IMR-90 (cell line): ENCODE measurements at regions of chr1 and their contacts with region 1.

Region 1: DNA sequence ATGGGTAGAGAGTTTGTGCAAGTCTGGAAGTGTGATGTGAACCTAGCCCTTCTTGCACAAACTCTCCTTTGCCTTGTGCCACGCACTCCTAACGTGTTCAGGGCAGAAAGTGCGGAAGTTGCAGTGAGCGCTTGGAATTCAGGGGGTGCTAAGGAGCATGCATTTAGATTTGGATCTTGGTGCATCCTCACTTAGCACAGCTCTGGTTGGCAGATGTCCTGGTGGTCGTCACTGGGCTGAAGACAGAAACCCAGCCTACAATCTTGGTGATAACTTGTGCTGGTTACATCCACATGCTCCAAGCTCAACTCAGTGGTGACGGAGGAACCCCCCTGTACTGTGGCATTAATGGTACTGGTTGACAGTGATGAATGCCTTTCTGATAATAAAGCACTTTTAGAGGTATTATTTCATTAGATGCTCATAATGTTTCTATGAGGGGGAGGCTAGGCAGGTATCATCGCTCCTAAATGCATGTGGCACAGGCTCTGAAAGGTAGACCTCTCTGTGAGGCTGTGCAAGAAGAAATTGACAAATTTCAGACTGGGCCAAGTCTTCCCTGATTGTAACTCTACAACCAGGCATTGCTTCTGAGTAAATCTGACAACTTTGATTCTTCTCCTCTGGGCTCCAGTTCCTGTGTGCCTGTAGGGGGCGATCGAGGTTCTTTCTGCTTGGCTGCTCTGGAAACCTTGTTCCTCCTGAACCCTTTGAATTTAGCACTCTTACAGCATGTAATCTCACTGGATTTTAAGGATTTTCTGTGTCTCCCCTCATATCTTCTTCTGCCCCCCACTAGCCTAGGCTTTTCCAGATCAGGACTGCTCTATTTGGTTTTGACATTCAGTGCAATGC is 40.6 kb downstream of the MAPKAPK2 start:
- DNase-seq: peak; percentile 51
- ATAC-seq: peak; percentile 48
- H3K4me3 ChIP-seq: no peak overlapping the region
- H3K27ac ChIP-seq: no peak overlapping the region
- H3K4me1 ChIP-seq: peaks cover 22% of the 10 kb centered on the region
- H3K27me3 ChIP-seq: no peaks in the 10 kb centered on the region
- CTCF ChIP-seq: peak; percentile 62
- POLR2A ChIP-seq: no peak
- RAD21 ChIP-seq: peak; percentile 47

Region 2: DNA sequence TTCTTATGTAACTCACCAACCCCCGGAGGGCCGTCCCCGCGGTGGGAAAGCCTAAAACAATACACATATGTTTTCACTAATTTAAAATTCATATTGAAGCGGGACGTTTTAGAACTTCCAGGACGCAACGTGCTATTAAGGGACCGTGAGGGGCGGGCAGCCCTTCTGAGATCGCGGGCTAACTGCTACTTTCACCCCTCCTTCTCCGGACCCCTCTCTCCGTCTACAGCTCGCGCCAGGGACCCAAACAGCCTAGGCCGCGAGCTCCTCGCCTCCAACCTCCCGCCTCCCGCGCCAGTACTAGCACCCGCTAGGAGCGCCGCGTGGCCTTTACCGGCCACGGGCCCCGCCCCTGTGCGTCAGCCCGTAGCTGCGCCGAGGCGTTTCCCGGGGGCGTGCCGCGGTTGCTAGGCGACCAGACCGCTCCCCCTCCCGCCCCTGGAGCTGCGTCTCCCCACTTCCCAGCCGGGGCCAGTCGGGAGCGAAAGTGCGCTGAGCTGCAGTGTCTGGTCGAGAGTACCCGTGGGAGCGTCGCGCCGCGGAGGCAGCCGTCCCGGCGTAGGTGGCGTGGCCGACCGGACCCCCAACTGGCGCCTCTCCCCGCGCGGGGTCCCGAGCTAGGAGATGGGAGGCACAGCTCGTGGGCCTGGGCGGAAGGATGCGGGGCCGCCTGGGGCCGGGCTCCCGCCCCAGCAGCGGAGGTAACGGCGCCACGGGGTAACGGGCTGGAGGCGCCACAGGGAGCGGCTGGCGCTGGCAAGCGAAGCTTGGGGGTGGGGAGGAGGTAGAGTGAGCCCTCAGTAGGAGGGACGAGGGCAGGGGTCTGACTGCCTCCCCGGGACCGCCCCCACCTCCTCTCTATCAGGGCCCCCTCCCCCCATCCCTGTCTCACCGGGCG is 90.0 kb before region 1 on chr1 and contains the start of gene DYRK3:
- CTCF ChIA-PET with region 1: no interaction called
- POLR2A ChIA-PET with region 1: no interaction called
- dilution Hi-C with region 1: no loop called
- in situ Hi-C with region 1: no loop called
- intact Hi-C with region 1: loop called (anchors 5 kb)
- DNase-seq: peak; percentile 92
- ATAC-seq: peak; percentile 88
- H3K4me3 ChIP-seq: peak within 1 kb of the TSS; percentile 94
- H3K27ac ChIP-seq: peak within 1 kb of the TSS; percentile 69
- H3K4me1 ChIP-seq: peaks cover 8% of the 10 kb centered on the region
- H3K27me3 ChIP-seq: no peaks in the 10 kb centered on the region
- CTCF ChIP-seq: peak; percentile 8; the same call in 1 of the 2 replicates
- POLR2A ChIP-seq: peak; percentile 96
- RAD21 ChIP-seq: no peak
- total RNA-seq, gene DYRK3: 21.1 and 22.0 TPM in 2 replicates

Region 3: GRCh38 chr1:206674745-206675175 is 50.6 kb before region 1 on chr1:
- CTCF ChIA-PET with region 1: no interaction called
- POLR2A ChIA-PET with region 1: no interaction called
- dilution Hi-C with region 1: no loop called
- in situ Hi-C with region 1: no loop called
- intact Hi-C with region 1: loop called (anchors 2 kb)
- DNase-seq: peak; percentile 100
- ATAC-seq: peak; percentile 98
- H3K4me3 ChIP-seq: no peak overlapping the region
- H3K27ac ChIP-seq: peak overlapping the region; percentile 79
- H3K4me1 ChIP-seq: peaks cover 21% of the 10 kb centered on the region
- H3K27me3 ChIP-seq: no peaks in the 10 kb centered on the region
- CTCF ChIP-seq: no peak
- POLR2A ChIP-seq: no peak
- RAD21 ChIP-seq: peak; percentile 10; the same call in 1 of the 2 replicates

Region 4: DNA sequence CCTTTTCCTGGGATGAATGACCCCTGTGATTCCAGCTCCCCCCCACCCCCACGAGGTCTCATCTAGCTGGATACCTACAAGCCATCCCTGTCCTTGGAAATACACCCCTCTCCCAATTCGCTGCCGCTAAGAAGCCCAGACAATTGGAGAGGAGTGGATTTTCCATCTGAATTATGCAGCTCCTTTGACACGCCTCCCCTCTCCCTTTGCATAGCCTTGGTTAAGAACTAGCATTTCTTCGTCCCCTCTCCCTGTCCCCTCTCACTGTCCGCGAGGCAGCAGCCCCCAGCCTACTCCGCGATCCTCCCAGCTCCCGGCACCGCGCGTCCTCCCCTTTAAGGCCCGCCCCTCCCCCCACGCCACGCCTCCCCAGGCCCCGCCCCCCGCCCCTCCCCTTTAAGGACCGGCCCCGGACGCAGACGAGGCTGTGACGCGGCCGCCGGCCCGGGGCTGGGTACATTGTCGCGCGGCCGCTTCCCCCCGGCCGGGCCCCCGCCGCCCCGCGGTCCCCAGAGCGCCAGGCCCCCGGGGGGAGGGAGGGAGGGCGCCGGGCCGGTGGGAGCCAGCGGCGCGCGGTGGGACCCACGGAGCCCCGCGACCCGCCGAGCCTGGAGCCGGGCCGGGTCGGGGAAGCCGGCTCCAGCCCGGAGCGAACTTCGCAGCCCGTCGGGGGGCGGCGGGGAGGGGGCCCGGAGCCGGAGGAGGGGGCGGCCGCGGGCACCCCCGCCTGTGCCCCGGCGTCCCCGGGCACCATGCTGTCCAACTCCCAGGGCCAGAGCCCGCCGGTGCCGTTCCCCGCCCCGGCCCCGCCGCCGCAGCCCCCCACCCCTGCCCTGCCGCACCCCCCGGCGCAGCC is 40.6 kb before region 1 on chr1 and contains the start of gene MAPKAPK2:
- CTCF ChIA-PET with region 1: no interaction called
- POLR2A ChIA-PET with region 1: no interaction called
- dilution Hi-C with region 1: no loop called
- in situ Hi-C with region 1: no loop called
- intact Hi-C with region 1: loop called (anchors 5 kb)
- DNase-seq: peak; percentile 61
- ATAC-seq: peak; percentile 77
- H3K4me3 ChIP-seq: peak within 1 kb of the TSS; percentile 96
- H3K27ac ChIP-seq: peak within 1 kb of the TSS; percentile 100
- H3K4me1 ChIP-seq: peaks cover 17% of the 10 kb centered on the region
- H3K27me3 ChIP-seq: no peaks in the 10 kb centered on the region; the same call in 1 of the 2 replicates
- CTCF ChIP-seq: no peak
- POLR2A ChIP-seq: peak; percentile 85
- RAD21 ChIP-seq: no peak
- total RNA-seq, gene MAPKAPK2: 50.8 and 56.5 TPM in 2 replicates

Region 5: GRCh38 chr1:206808615-206809014 is 83.3 kb after region 1 on chr1:
- CTCF ChIA-PET with region 1: no interaction called
- POLR2A ChIA-PET with region 1: no interaction called
- dilution Hi-C with region 1: no loop called
- in situ Hi-C with region 1: no loop called
- intact Hi-C with region 1: loop called (anchors 2 kb)
- DNase-seq: peak; percentile 57
- ATAC-seq: peak; percentile 54; the same call in 1 of the 2 replicates
- H3K4me3 ChIP-seq: no peak overlapping the region
- H3K27ac ChIP-seq: no peak overlapping the region
- H3K4me1 ChIP-seq: no peaks in the 10 kb centered on the region
- H3K27me3 ChIP-seq: peaks cover 5% of the 10 kb centered on the region; the same call in 1 of the 2 replicates
- CTCF ChIP-seq: peak; percentile 62
- POLR2A ChIP-seq: no peak
- RAD21 ChIP-seq: peak; percentile 82